Colonic mucosa (tissue), 4 donors: ENCODE measurements at regions of chr12 and their contacts with region 1.

Region 1: DNA sequence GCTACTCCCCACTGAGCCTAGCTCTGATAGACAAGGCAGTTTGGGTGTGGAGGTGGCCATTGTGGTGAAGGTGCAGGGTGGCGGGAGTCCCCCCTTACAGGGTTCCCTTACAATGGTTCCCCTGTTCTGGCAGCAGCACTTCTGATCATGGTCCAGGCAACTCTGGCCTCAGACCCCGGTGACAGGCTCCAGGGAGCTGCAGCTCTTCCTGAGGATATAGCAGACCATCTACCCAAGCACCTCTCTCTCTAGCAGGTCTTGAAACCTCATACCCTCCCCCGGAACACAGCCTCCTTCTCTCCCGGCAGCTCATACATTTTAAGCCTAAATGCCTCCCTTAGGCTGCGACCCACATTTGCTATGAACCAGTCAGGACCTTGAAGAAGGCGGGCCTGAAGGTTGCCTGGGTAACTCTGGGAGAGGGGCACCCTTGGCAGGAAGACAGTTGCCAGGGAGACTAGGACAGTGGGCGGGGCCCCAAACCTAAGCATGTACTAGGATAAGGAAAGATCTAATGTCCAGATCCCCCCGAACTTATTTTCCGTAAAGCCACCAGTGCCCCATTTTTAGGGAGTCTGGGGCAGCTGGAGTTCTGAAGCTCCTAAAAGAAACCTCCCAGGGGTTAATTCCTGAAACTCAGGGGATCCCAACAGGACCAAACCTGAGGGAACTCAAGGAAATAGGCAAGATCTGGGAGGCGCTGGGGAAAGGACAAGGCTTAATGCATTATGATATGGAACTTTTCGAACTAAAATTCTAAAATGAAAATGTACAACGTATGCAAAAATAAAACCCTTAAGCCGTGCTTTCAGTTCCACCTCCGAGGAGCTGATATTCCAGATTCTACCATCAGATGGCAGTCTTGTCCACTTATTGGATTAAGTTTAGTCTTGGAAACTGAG is 4.5 kb upstream of the GDF11 start:
- DNase-seq: peak; percentile 93
- H3K4me3 ChIP-seq: peak overlapping the region; percentile 37
- H3K27ac ChIP-seq: peak overlapping the region; percentile 58
- H3K4me1 ChIP-seq: peaks cover 9% of the 10 kb centered on the region
- H3K27me3 ChIP-seq: no peaks in the 10 kb centered on the region
- CTCF ChIP-seq: peak; percentile 89

Region 2: DNA sequence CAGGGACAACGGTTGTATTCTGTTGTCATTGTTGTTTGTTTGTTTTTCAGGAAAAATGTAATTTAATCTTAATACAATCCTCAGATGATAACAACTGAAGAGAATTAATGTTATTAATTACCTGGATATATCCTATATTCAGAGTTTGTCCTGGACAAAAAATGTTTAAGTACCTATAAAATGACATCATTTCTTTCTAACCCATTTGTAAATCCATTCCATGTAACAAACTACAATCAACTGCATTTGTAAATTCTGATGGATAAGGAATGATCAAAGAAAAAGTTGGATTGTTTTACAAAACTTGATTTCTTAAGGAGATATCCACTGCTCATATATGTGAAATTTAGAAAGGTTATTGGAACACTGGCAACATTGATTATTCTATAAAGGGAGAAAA is 286.7 kb before region 1 on chr12:
- intact Hi-C with region 1: no loop called
- DNase-seq: no peak
- H3K4me3 ChIP-seq: no peak overlapping the region
- H3K27ac ChIP-seq: no peak overlapping the region
- H3K4me1 ChIP-seq: no peaks in the 10 kb centered on the region
- H3K27me3 ChIP-seq: no peaks in the 10 kb centered on the region
- CTCF ChIP-seq: no peak

Region 3: GRCh38 chr12:55789893-55790292 is 51.5 kb after region 1 on chr12:
- intact Hi-C with region 1: loop called (anchors 5 kb)
- DNase-seq: no peak
- H3K4me3 ChIP-seq: no peak overlapping the region
- H3K27ac ChIP-seq: no peak overlapping the region
- H3K4me1 ChIP-seq: no peaks in the 10 kb centered on the region
- H3K27me3 ChIP-seq: no peaks in the 10 kb centered on the region
- CTCF ChIP-seq: no peak

Region 4: GRCh38 chr12:55935738-55936151 is 197.4 kb after region 1 on chr12:
- intact Hi-C with region 1: loop called (anchors 5 kb)
- DNase-seq: no peak
- H3K4me3 ChIP-seq: no peak overlapping the region
- H3K27ac ChIP-seq: peak overlapping the region; percentile 16
- H3K4me1 ChIP-seq: peaks cover 9% of the 10 kb centered on the region
- H3K27me3 ChIP-seq: no peaks in the 10 kb centered on the region
- CTCF ChIP-seq: no peak

Region 5: GRCh38 chr12:56029666-56030293 is 291.4 kb after region 1 on chr12:
- intact Hi-C with region 1: loop called (anchors 10 kb)
- DNase-seq: peak; percentile 54
- H3K4me3 ChIP-seq: no peak overlapping the region
- H3K27ac ChIP-seq: no peak overlapping the region
- H3K4me1 ChIP-seq: no peaks in the 10 kb centered on the region
- H3K27me3 ChIP-seq: no peaks in the 10 kb centered on the region
- CTCF ChIP-seq: peak; percentile 58